ENCODE measurements at regions of chr2 and their contacts with region 1.

Region 1: GRCh38 chr2:71528749-71529148 is 75.4 kb downstream of the DYSF start:
- DNase-seq: no peak
- ATAC-seq: no peak
- H3K4me3 ChIP-seq: no peak overlapping the region
- H3K27ac ChIP-seq: no peak overlapping the region
- H3K4me1 ChIP-seq: peaks cover 15% of the 10 kb centered on the region
- H3K27me3 ChIP-seq: peaks cover 2 to 38% of the 10 kb centered on the region in 2 experiments; a peak in 4 of 5 replicates
- CTCF ChIP-seq: no peak
- EP300 ChIP-seq: no peak
- POLR2A ChIP-seq: no peak
- RAD21 ChIP-seq: no peak

Region 2: GRCh38 chr2:71423817-71424420 is 104.8 kb before region 1 on chr2:
- CTCF ChIA-PET with region 1: no interaction called
- POLR2A ChIA-PET with region 1: no interaction called
- in situ Hi-C with region 1: no loop called
- intact Hi-C with region 1: no loop called
- DNase-seq: no peak
- ATAC-seq: no peak
- H3K4me3 ChIP-seq: no peak overlapping the region
- H3K27ac ChIP-seq: no peak overlapping the region
- H3K4me1 ChIP-seq: peaks cover 13% of the 10 kb centered on the region; the same call in 1 of the 2 replicates
- H3K27me3 ChIP-seq: no peaks in the 10 kb centered on the region
- CTCF ChIP-seq: no peak
- EP300 ChIP-seq: no peak
- POLR2A ChIP-seq: no peak
- RAD21 ChIP-seq: no peak

Region 3: GRCh38 chr2:71482055-71482454 is 46.7 kb before region 1 on chr2:
- CTCF ChIA-PET with region 1: no interaction called
- POLR2A ChIA-PET with region 1: no interaction called
- in situ Hi-C with region 1: no loop called
- intact Hi-C with region 1: loop called (anchors 1 kb)
- DNase-seq: no peak
- ATAC-seq: peak; percentile 87
- H3K4me3 ChIP-seq: no peak overlapping the region
- H3K27ac ChIP-seq: no peak overlapping the region
- H3K4me1 ChIP-seq: no peaks in the 10 kb centered on the region
- H3K27me3 ChIP-seq: peaks cover 2 to 39% of the 10 kb centered on the region in 2 experiments; a peak in 2 of 5 replicates
- CTCF ChIP-seq: peak; percentile 48
- EP300 ChIP-seq: no peak
- POLR2A ChIP-seq: no peak
- RAD21 ChIP-seq: no peak

Measured in HepG2 (cell line).